A673 (cell line): ENCODE measurements at regions of chr3 and their contacts with region 1.

Region 1: GRCh38 chr3:192409357-192409824 is 317.9 kb downstream of the FGF12 start:
- DNase-seq: no peak
- H3K4me3 ChIP-seq: peak overlapping the region; percentile 70
- H3K27ac ChIP-seq: peak overlapping the region; percentile 63
- H3K4me1 ChIP-seq: no peaks in the 10 kb centered on the region
- H3K27me3 ChIP-seq: peaks cover 44% of the 10 kb centered on the region
- CTCF ChIP-seq: no peak

Region 2: DNA sequence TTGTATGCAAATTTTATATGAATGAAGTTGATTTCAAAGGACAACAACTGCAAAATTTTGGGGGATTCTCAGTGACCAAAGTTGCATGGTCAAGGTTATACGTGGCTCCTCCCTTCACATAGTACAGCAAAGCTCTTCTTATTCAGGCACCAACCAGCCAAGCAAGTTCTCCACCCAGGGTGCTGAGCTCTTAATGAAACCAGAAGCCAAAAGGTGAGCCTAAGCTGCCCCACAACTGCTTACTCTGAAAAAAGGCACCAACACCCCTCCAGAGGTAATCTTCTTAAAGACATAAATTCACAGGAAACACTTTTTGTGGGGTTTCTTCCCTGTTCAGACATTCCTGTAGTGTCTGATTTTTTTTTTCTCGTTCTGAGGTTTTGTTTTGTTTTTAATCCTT is 1440.8 kb before region 1 on chr3:
- CTCF ChIA-PET with region 1: no interaction called
- POLR2A ChIA-PET with region 1: interaction called, 12 read pairs
- intact Hi-C with region 1: no loop called
- DNase-seq: peak; percentile 4
- H3K4me3 ChIP-seq: no peak overlapping the region
- H3K27ac ChIP-seq: no peak overlapping the region
- H3K4me1 ChIP-seq: peaks cover 3% of the 10 kb centered on the region
- H3K27me3 ChIP-seq: no peaks in the 10 kb centered on the region
- CTCF ChIP-seq: no peak

Region 3: GRCh38 chr3:192382861-192383260 is 26.5 kb before region 1 on chr3:
- CTCF ChIA-PET with region 1: no interaction called
- POLR2A ChIA-PET with region 1: no interaction called
- intact Hi-C with region 1: loop called (anchors 1 kb)
- DNase-seq: no peak
- H3K4me3 ChIP-seq: no peak overlapping the region
- H3K27ac ChIP-seq: no peak overlapping the region
- H3K4me1 ChIP-seq: no peaks in the 10 kb centered on the region
- H3K27me3 ChIP-seq: no peaks in the 10 kb centered on the region
- CTCF ChIP-seq: no peak